Activated CD4-positive, alpha-beta T cell treated with anti-CD3 and anti-CD28 coated beads for 36 hours (primary cell): ENCODE measurements at regions of chr2 and their contacts with region 1.

Region 1: DNA sequence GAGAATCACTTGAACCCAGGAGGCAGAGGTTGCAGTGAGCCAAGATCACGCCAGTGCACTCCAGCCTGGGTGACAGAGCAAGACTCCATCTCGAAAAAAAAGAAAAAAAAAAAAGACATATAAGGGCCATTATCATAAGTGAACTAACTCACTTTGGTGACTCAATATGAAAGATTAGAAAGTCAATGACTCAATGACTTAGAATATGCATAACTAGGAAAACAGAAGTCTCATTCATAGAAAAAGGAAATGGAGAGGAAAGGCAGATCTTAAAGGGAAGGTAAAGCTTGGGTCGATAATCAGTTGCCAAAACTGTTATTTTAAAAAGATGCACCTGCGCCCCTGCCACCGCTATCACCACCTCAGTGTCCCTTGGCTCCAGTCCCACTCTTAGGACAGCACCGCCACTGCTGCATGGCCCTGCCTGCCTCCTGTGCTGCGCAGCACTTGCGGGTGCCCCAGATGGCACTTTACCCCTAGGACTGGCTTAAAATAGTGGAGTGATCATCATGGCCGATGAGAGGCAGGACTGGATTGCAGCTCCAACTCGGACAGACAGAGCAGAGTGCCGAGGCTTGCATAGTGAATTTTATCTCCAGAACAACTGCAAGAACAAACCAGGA is 54.7 kb downstream of the INO80D start:
- DNase-seq: peak; percentile 19
- ATAC-seq: peak; percentile 96
- H3K4me3 Mint-ChIP-seq: no peak overlapping the region
- H3K27ac Mint-ChIP-seq: peak overlapping the region; percentile 21
- H3K4me1 Mint-ChIP-seq: peaks cover 64% of the 10 kb centered on the region
- H3K27me3 Mint-ChIP-seq: no peaks in the 10 kb centered on the region

Region 2: GRCh38 chr2:205925373-205926337 is 105.6 kb before region 1 on chr2:
- CTCF ChIA-PET with region 1: no interaction called
- POLR2A ChIA-PET with region 1: no interaction called
- intact Hi-C with region 1: no loop called
- DNase-seq: peak; percentile 88
- ATAC-seq: peak; percentile 98
- H3K4me3 Mint-ChIP-seq: no peak overlapping the region
- H3K27ac Mint-ChIP-seq: no peak overlapping the region
- H3K4me1 Mint-ChIP-seq: peaks cover 7% of the 10 kb centered on the region
- H3K27me3 Mint-ChIP-seq: peaks cover 45% of the 10 kb centered on the region

Region 3: GRCh38 chr2:206085742-206086445 is 54.6 kb after region 1 on chr2 and contains the start of gene INO80D:
- CTCF ChIA-PET with region 1: interaction called, 5 read pairs
- POLR2A ChIA-PET with region 1: interaction called, 3 read pairs
- intact Hi-C with region 1: loop called (anchors 1 to 5 kb)
- DNase-seq: peak; percentile 89
- ATAC-seq: peak; percentile 96
- H3K4me3 Mint-ChIP-seq: peak within 1 kb of the TSS; percentile 96
- H3K27ac Mint-ChIP-seq: peak within 1 kb of the TSS; percentile 99
- H3K4me1 Mint-ChIP-seq: peaks cover 28% of the 10 kb centered on the region
- H3K27me3 Mint-ChIP-seq: no peaks in the 10 kb centered on the region
- total RNA-seq, gene INO80D: 17.6 to 18.9 TPM

Region 4: DNA sequence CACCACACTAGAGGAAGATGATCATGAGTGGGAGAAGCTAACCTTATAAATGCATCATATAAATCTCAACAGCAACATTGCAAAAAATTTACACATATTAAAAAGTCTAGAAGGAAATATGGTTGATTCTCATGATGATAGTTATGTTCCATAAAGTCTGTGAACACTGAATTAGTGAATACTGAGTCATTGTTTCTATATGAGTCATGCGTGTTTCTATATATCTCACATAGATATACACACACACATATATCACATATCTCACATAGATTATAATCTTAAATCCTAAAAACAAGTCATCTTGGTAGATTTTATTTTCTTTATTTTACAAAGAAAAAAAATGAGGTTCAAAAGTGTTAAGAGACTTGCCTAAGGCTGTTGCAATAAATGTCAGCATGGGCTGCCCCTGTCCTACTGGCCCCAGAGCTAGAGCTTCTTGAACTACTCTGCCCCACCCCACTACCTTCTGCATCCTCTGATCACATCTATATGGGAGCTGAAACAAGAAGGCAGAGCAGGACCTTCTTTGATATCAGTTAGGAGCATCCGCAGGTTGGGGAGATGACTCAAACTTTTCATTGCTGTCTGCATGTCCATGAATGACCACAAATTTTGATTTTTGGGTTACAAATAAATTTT is 330.3 kb after region 1 on chr2:
- CTCF ChIA-PET with region 1: no interaction called
- POLR2A ChIA-PET with region 1: no interaction called
- intact Hi-C with region 1: loop called in 1 of 2 experiments (anchors 2 kb)
- DNase-seq: peak; percentile 44
- ATAC-seq: peak; percentile 93
- H3K4me3 Mint-ChIP-seq: no peak overlapping the region
- H3K27ac Mint-ChIP-seq: no peak overlapping the region
- H3K4me1 Mint-ChIP-seq: peaks cover 10% of the 10 kb centered on the region
- H3K27me3 Mint-ChIP-seq: peaks cover 7% of the 10 kb centered on the region